ENCODE measurements at regions of chr20 and their contacts with region 1.

Region 1: DNA sequence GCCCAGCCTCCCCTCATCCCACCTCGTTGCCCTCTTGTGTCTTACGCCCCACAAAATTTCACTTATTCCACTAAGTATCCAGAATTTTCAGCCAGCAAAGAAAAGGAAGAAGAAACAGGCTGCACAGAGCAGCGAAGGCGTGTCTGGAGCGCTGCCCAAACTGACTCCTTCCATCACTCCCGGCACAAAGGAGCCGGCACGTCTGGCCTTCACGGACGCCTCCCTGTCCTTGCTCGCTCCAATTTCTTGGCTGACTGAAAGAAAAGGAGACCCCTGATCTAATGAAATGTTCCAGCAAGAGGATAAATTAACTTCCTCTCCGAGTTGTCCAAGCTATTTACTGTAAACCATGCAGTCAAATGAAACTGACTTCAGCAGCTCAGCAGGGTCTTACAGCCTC is 152.3 kb upstream of the CDH4 start:
- DNase-seq: no peak

Region 2: DNA sequence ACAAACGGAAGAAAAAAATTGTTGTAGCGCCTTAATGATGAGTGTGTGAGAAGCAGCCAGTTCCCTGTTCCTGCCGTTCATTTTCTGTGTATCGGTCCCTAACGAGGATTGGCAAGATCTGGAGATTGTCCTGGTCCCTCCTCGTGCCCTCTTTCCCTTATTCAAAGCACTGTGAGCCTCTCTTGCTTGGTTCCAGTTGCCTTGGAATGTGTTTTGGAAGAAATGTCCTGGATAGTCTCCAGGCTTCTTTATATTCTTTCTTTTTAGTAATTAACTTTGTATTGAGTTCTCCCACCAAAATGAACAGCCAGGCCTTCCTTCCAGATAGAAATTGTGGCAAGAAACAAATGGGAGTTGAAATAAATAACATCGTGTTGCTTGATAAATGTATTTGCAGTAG is 793.3 kb before region 1 on chr20:
- intact Hi-C with region 1: loop called in 1 of 2 experiments (anchors 10 kb)
- DNase-seq: no peak

Region 3: GRCh38 chr20:61052195-61052750 is 47.5 kb before region 1 on chr20:
- intact Hi-C with region 1: loop called in 1 of 2 experiments (anchors 2 kb)
- DNase-seq: peak; percentile 24

Region 4: GRCh38 chr20:61436678-61437279 is 337.0 kb after region 1 on chr20:
- intact Hi-C with region 1: loop called in 1 of 2 experiments (anchors 5 kb)
- DNase-seq: no peak

Measured in posterior vena cava (tissue), 2 donors.